CD14-positive monocyte (primary cell): ENCODE measurements at regions of chr1 and their contacts with region 1.

Region 1: GRCh38 chr1:67674260-67675011 is 10.6 kb upstream of the GADD45A start:
- DNase-seq: no peak
- H3K4me3 ChIP-seq: no peak overlapping the region
- H3K4me3 Mint-ChIP-seq: no peak overlapping the region
- H3K27ac ChIP-seq: no peak overlapping the region
- H3K27ac Mint-ChIP-seq: peak overlapping the region in 2 of 7 donors; percentile 26 to 64
- H3K4me1 ChIP-seq: peaks cover 4 to 5% of the 10 kb centered on the region in 2 donors
- H3K4me1 Mint-ChIP-seq: peaks cover 8% of the 10 kb centered on the region
- H3K27me3 ChIP-seq: no peaks in the 10 kb centered on the region
- H3K27me3 Mint-ChIP-seq: peaks cover 1 to 2% (median 1%) of the 10 kb centered on the region in 3 donors
- CTCF ChIP-seq: no peak

Region 2: DNA sequence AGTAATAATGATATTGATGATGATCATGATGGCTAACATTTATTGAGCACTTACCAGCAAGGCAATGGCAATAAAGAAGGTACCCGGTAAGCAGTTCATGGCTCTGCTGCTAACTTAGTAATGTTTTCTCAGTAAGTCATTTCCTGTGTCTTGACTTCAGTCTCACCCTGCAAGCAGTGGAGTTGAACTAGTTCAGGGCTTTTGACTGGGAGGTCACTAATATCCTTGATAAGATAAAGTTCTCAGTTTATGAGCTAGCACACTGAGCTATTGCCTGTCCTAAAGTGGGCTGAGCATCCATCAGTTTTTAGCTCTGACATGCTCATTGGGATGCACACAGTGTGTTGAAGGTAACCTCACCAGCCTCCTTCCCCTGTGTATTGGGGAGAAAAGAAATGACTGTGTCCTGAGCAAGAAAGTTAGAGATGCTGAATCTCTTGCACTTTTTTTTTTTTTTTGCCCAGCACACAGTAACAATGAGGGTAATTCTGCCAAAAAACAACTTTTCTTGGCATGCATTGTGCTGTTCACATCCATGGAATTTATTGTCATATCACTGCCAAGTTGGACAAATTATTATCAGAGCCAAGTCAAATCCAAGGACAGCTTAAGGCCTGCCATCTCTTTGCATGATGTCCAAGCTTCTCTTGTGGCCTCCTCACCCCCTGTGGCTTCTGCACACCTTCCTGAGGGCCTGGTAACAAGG is 44.9 kb before region 1 on chr1:
- intact Hi-C with region 1: loop called in 1 of 2 experiments (anchors 5 kb)
- DNase-seq: no peak
- H3K4me3 ChIP-seq: no peak overlapping the region
- H3K4me3 Mint-ChIP-seq: no peak overlapping the region
- H3K27ac ChIP-seq: no peak overlapping the region
- H3K27ac Mint-ChIP-seq: no peak overlapping the region
- H3K4me1 ChIP-seq: peaks cover 3% of the 10 kb centered on the region in 2 donors
- H3K4me1 Mint-ChIP-seq: peaks cover 3% of the 10 kb centered on the region
- H3K27me3 ChIP-seq: no peaks in the 10 kb centered on the region
- H3K27me3 Mint-ChIP-seq: peaks cover 0 to 4% (median 2%) of the 10 kb centered on the region in 3 donors
- CTCF ChIP-seq: no peak